Activated CD4-positive, alpha-beta T cell treated with anti-CD3 and anti-CD28 coated beads for 36 hours (primary cell): ENCODE measurements at regions of chr2 and their contacts with region 1.

Region 1: GRCh38 chr2:26942543-26943295 is 27.7 kb upstream of the MAPRE3 start:
- DNase-seq: peak; percentile 84
- ATAC-seq: peak; percentile 64
- H3K4me3 Mint-ChIP-seq: no peak overlapping the region
- H3K27ac Mint-ChIP-seq: no peak overlapping the region
- H3K4me1 Mint-ChIP-seq: peaks cover 2% of the 10 kb centered on the region
- H3K27me3 Mint-ChIP-seq: peaks cover 4% of the 10 kb centered on the region

Region 2: DNA sequence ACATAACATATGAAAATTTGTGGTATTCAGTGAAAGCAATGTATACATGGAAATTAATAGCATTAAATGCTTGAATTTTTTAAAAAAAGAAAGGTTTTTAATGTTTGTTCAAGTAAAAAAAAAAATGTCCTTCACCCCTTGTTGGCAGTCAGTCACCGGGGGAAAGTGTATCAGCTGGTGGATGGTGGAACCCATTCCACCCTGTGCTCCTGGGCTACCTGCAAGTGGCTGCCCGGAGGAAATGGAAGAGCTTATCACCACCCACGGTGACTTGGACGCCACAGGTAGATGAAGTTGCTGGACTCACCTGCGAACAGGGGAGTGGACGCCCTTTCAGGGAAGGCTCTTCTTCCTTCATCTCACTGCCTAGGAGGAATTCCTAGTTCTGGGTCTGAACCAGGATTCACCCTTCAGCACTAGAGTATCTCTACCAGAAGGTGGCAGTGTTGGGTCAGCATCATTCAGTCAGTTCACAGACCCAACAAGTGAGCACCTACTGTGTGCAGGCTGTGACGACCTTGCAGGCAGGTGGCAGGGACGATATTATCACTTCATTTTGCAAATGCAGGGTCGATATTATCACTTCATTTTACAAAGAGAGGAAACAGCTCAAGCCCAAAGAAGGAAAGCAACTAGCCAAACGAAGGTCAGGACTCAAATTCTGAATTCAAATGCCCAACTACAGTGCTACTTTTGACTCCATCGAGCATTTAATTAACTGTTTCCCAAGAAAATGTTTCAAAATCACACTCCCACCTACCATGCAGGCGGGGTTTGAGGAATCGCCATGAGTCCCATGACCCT is 337.3 kb before region 1 on chr2:
- CTCF ChIA-PET with region 1: no interaction called
- POLR2A ChIA-PET with region 1: no interaction called
- intact Hi-C with region 1: loop called in 1 of 2 experiments (anchors 5 kb)
- DNase-seq: peak; percentile 56
- ATAC-seq: peak; percentile 61
- H3K4me3 Mint-ChIP-seq: no peak overlapping the region
- H3K27ac Mint-ChIP-seq: no peak overlapping the region
- H3K4me1 Mint-ChIP-seq: peaks cover 18% of the 10 kb centered on the region
- H3K27me3 Mint-ChIP-seq: peaks cover 11% of the 10 kb centered on the region

Region 3: DNA sequence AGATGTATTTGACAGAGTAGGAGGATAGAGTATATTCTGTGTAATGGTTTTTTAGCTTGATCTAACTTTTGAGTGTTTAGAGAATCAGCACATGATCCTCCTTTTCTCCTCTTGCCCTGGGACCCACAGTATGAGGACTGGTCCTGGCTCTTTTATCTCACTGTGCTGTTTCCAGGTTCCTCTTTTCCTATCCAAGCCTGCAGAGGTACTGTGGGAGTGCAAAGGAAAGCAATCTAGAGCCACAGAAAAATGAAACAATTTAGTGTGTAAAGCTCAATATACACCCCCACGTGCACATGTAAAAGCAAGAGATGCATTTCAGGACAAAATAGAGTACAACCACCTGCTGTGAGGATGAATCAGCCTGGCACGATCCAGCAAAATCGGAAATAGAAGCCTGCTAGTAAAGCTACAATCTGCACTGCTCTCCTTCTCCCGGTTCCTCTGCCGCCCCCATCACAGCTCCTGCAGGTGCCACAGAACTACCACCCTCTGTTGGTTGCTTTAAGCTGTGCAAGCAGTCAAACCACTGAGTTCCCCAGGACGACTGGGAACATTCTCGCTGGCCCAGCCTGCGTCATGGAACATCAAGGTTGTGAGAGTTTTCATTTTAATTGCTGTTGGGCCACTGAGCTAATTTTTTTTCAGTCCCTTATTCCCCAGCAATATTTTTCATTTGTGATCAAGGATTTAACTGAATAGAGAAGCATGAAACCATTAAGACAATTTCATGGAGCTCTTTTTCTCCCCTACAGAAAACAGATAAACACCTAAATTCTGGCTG is 20.1 kb before region 1 on chr2:
- CTCF ChIA-PET with region 1: interaction called, 10 read pairs
- POLR2A ChIA-PET with region 1: no interaction called
- intact Hi-C with region 1: no loop called
- DNase-seq: peak; percentile 71
- ATAC-seq: peak; percentile 93
- H3K4me3 Mint-ChIP-seq: no peak overlapping the region
- H3K27ac Mint-ChIP-seq: no peak overlapping the region
- H3K4me1 Mint-ChIP-seq: peaks cover 10% of the 10 kb centered on the region
- H3K27me3 Mint-ChIP-seq: peaks cover 13% of the 10 kb centered on the region

Region 4: GRCh38 chr2:27202854-27203253 is 260.1 kb after region 1 on chr2:
- CTCF ChIA-PET with region 1: no interaction called
- POLR2A ChIA-PET with region 1: no interaction called
- intact Hi-C with region 1: no loop called
- DNase-seq: no peak
- ATAC-seq: no peak
- H3K4me3 Mint-ChIP-seq: no peak overlapping the region
- H3K27ac Mint-ChIP-seq: no peak overlapping the region
- H3K4me1 Mint-ChIP-seq: no peaks in the 10 kb centered on the region
- H3K27me3 Mint-ChIP-seq: no peaks in the 10 kb centered on the region